ENCODE measurements at regions of chr18 and their contacts with region 1.

Region 1: DNA sequence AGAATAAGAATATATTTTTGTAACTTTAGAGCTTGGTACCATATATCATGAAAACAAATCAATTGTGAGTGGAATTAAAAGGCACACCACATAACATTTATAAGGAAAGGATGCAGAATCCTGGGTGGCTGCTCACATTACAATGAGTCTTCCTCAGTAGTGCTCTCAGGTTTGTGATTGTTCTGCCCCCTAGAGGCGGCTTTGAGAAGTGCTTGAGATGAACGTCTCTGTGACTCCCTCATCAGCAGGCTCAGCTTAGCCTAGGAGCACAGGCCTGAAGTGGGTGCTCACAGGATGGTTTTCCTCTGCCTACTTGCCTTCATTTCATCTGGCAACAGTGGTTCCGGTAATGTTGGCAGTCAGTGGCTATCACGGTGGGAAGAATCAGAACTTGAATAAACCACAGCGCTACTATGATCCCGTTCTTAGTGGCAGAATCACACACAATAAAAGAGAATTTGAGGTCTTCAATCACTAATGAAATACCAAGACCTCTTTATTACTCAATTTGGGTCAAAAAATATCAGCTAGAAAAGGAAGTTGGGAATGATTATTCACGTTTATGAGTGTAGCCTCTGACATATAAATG is 38.1 kb upstream of the B4GALT6 start:
- DNase-seq: peak; percentile 43
- ATAC-seq: peak; percentile 100
- H3K4me3 ChIP-seq: no peak overlapping the region
- H3K27ac ChIP-seq: no peak overlapping the region
- H3K4me1 ChIP-seq: no peaks in the 10 kb centered on the region
- H3K27me3 ChIP-seq: no peaks in the 10 kb centered on the region
- CTCF ChIP-seq: peak; percentile 88 to 92 (median 90)
- EP300 ChIP-seq: no peak
- POLR2A ChIP-seq: no peak
- RAD21 ChIP-seq: peak; percentile 89

Region 2: GRCh38 chr18:30987450-30988241 is 734.8 kb before region 1 on chr18:
- CTCF ChIA-PET with region 1: no interaction called
- POLR2A ChIA-PET with region 1: no interaction called
- RAD21 ChIA-PET with region 1: no interaction called
- SMC1A ChIA-PET with region 1: no interaction called
- in situ Hi-C with region 1: no loop called
- intact Hi-C with region 1: no loop called
- DNase-seq: no peak
- ATAC-seq: no peak
- H3K4me3 ChIP-seq: no peak overlapping the region
- H3K27ac ChIP-seq: no peak overlapping the region
- H3K4me1 ChIP-seq: no peaks in the 10 kb centered on the region
- H3K27me3 ChIP-seq: no peaks in the 10 kb centered on the region; a peak in 1 of 4 replicates
- CTCF ChIP-seq: no peak
- EP300 ChIP-seq: no peak
- POLR2A ChIP-seq: no peak
- RAD21 ChIP-seq: no peak

Region 3: GRCh38 chr18:31429621-31430020 is 292.8 kb before region 1 on chr18:
- CTCF ChIA-PET with region 1: interaction called, 9 read pairs
- POLR2A ChIA-PET with region 1: no interaction called
- RAD21 ChIA-PET with region 1: interaction called, 4 read pairs
- SMC1A ChIA-PET with region 1: interaction called, 7 read pairs
- in situ Hi-C with region 1: no loop called
- intact Hi-C with region 1: loop called (anchors 5 kb)
- DNase-seq: no peak
- ATAC-seq: no peak
- H3K4me3 ChIP-seq: no peak overlapping the region
- H3K27ac ChIP-seq: no peak overlapping the region
- H3K4me1 ChIP-seq: no peaks in the 10 kb centered on the region
- H3K27me3 ChIP-seq: no peaks in the 10 kb centered on the region
- CTCF ChIP-seq: no peak
- EP300 ChIP-seq: no peak
- POLR2A ChIP-seq: no peak
- RAD21 ChIP-seq: no peak

Region 4: GRCh38 chr18:31563778-31564177 is 158.7 kb before region 1 on chr18:
- CTCF ChIA-PET with region 1: interaction called, 224 read pairs
- POLR2A ChIA-PET with region 1: no interaction called
- RAD21 ChIA-PET with region 1: interaction called, 21 read pairs
- SMC1A ChIA-PET with region 1: interaction called, 87 read pairs
- in situ Hi-C with region 1: loop called (anchors 5 kb)
- intact Hi-C with region 1: no loop called
- DNase-seq: no peak
- ATAC-seq: 0 out of 3 replicates have a peak, but pooled peaks have one; percentile 45
- H3K4me3 ChIP-seq: no peak overlapping the region
- H3K27ac ChIP-seq: no peak overlapping the region
- H3K4me1 ChIP-seq: no peaks in the 10 kb centered on the region
- H3K27me3 ChIP-seq: no peaks in the 10 kb centered on the region
- CTCF ChIP-seq: peak in 2 of 3 experiments; percentile 19 to 28; a peak in 2 of 6 replicates
- EP300 ChIP-seq: no peak
- POLR2A ChIP-seq: no peak
- RAD21 ChIP-seq: peak; percentile 44

Region 5: GRCh38 chr18:31634331-31634713 is 88.1 kb before region 1 on chr18:
- CTCF ChIA-PET with region 1: interaction called, 8 read pairs
- POLR2A ChIA-PET with region 1: no interaction called
- RAD21 ChIA-PET with region 1: no interaction called
- SMC1A ChIA-PET with region 1: interaction called, 4 read pairs
- in situ Hi-C with region 1: no loop called
- intact Hi-C with region 1: loop called (anchors 5 kb)
- DNase-seq: peak; percentile 85
- ATAC-seq: peak; percentile 98
- H3K4me3 ChIP-seq: no peak overlapping the region
- H3K27ac ChIP-seq: peak overlapping the region; percentile 70
- H3K4me1 ChIP-seq: peaks cover 35% of the 10 kb centered on the region
- H3K27me3 ChIP-seq: no peaks in the 10 kb centered on the region
- CTCF ChIP-seq: no peak
- EP300 ChIP-seq: peak in 1 of 2 experiments; percentile 51; a peak in 1 of 4 replicates
- POLR2A ChIP-seq: no peak
- RAD21 ChIP-seq: peak; percentile 22; the same call in 1 of the 2 replicates

Region 6: GRCh38 chr18:31667185-31667584 is 55.3 kb before region 1 on chr18:
- CTCF ChIA-PET with region 1: interaction called, 15 read pairs
- POLR2A ChIA-PET with region 1: no interaction called
- RAD21 ChIA-PET with region 1: no interaction called
- SMC1A ChIA-PET with region 1: interaction called, 3 read pairs
- in situ Hi-C with region 1: no loop called
- intact Hi-C with region 1: no loop called
- DNase-seq: no peak
- ATAC-seq: no peak
- H3K4me3 ChIP-seq: no peak overlapping the region
- H3K27ac ChIP-seq: no peak overlapping the region
- H3K4me1 ChIP-seq: no peaks in the 10 kb centered on the region
- H3K27me3 ChIP-seq: no peaks in the 10 kb centered on the region
- CTCF ChIP-seq: no peak
- EP300 ChIP-seq: no peak
- POLR2A ChIP-seq: no peak
- RAD21 ChIP-seq: no peak

Region 7: GRCh38 chr18:31701744-31702143 is 20.7 kb before region 1 on chr18:
- CTCF ChIA-PET with region 1: interaction called, 19 read pairs
- POLR2A ChIA-PET with region 1: no interaction called
- RAD21 ChIA-PET with region 1: no interaction called
- SMC1A ChIA-PET with region 1: interaction called, 6 read pairs
- in situ Hi-C with region 1: no loop called
- intact Hi-C with region 1: no loop called
- DNase-seq: no peak
- ATAC-seq: no peak
- H3K4me3 ChIP-seq: no peak overlapping the region
- H3K27ac ChIP-seq: no peak overlapping the region
- H3K4me1 ChIP-seq: no peaks in the 10 kb centered on the region
- H3K27me3 ChIP-seq: no peaks in the 10 kb centered on the region
- CTCF ChIP-seq: no peak
- EP300 ChIP-seq: no peak
- POLR2A ChIP-seq: no peak
- RAD21 ChIP-seq: no peak

Region 8: GRCh38 chr18:31819106-31819924 is 96.9 kb after region 1 on chr18:
- CTCF ChIA-PET with region 1: interaction called, 10 read pairs
- POLR2A ChIA-PET with region 1: no interaction called
- RAD21 ChIA-PET with region 1: interaction called, 3 read pairs
- SMC1A ChIA-PET with region 1: interaction called, 4 read pairs
- in situ Hi-C with region 1: no loop called
- intact Hi-C with region 1: loop called (anchors 5 kb)
- DNase-seq: no peak
- ATAC-seq: peak; percentile 95
- H3K4me3 ChIP-seq: no peak overlapping the region
- H3K27ac ChIP-seq: no peak overlapping the region
- H3K4me1 ChIP-seq: no peaks in the 10 kb centered on the region; the same call in 1 of the 2 replicates
- H3K27me3 ChIP-seq: no peaks in the 10 kb centered on the region
- CTCF ChIP-seq: peak; percentile 57 to 80 (median 64); a peak in 5 of 6 replicates
- EP300 ChIP-seq: no peak
- POLR2A ChIP-seq: no peak
- RAD21 ChIP-seq: peak; percentile 94